ENCODE measurements at regions of chr11 and their contacts with region 1.

Region 1: DNA sequence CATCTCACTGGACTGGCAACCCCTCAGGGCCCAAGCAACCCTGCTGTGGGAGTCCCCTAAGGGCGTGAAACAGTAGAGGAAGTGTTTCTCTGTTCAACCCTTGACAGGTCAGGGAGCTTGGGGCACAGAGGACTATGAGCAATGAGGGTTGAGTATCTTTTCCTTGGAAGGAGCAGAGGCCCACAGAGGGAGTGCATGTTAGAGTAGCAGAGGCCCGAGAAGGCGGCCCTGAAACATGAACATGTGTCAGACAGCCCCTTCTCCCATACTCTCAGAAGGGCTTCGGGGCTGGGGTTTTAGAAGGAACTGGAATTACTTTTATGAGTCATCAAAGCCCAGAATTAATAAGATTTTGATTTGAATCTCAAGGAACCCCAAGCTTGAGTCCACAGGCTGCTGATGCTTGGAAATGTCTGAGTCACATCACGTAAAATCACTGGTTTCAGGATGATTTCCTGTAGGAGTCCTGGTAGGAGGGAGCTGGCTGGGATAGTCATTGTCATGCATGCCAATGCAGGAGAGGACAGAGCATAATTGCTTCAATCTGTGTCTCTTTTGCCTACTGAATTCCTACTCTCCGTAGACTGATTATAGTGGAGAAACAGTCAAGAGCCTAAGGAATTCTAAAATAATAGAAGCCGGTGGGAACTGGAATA is 22.6 kb downstream of the C11orf71 start:
- DNase-seq: no peak
- H3K4me3 ChIP-seq: no peak overlapping the region
- CTCF ChIP-seq: no peak

Region 2: GRCh38 chr11:114340311-114341131 is 37.2 kb before region 1 on chr11:
- in situ Hi-C with region 1: loop called (anchors 5 kb)
- DNase-seq: peak; percentile 65
- H3K4me3 ChIP-seq: no peak overlapping the region
- CTCF ChIP-seq: peak; percentile 84

Measured in astrocyte of the cerebellum (primary cell).